AG04450 (cell line): ENCODE measurements at regions of chr4 and their contacts with region 1.

Region 1: GRCh38 chr4:152500800-152501434 is 35.0 kb downstream of the FBXW7 start:
- DNase-seq: peak; percentile 83
- H3K4me3 ChIP-seq: no peak overlapping the region
- H3K27ac ChIP-seq: no peak overlapping the region
- H3K27me3 ChIP-seq: no peaks in the 10 kb centered on the region
- CTCF ChIP-seq: peak; percentile 80

Region 2: GRCh38 chr4:152464030-152464823 is 36.7 kb before region 1 on chr4:
- CTCF ChIA-PET with region 1: interaction called, 22 read pairs
- POLR2A ChIA-PET with region 1: no interaction called
- DNase-seq: no peak
- H3K4me3 ChIP-seq: no peak overlapping the region
- H3K27ac ChIP-seq: no peak overlapping the region
- H3K27me3 ChIP-seq: no peaks in the 10 kb centered on the region
- CTCF ChIP-seq: no peak

Region 3: DNA sequence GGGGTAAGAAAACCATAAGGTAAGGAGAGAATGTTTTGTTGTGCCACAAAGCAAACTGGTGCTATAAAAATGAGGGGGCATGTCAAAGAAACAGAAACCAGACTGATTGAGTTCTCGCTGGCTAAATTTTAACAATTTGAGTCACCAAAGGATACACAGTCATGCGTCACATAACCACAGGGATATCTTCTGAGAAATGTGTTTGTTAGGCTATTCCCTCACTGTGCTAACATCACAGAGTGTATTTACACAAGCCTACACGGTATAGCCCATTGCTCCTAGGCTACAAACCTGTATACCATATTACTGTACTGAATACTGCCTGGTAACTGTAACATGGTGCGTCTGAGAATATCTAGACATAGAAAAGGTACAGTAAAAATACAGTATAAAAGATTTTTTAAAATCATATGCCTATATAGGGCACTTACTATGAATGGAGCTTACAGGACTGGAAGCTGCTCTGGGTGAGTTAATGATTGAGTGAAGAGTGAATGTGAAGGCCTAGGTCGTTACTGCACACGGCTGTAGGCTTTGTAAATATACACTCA is 15.1 kb before region 1 on chr4:
- CTCF ChIA-PET with region 1: interaction called, 52 read pairs
- POLR2A ChIA-PET with region 1: no interaction called
- DNase-seq: peak; percentile 42
- H3K4me3 ChIP-seq: peak overlapping the region; percentile 18; the same call in 1 of the 2 replicates
- H3K27ac ChIP-seq: no peak overlapping the region
- H3K27me3 ChIP-seq: no peaks in the 10 kb centered on the region
- CTCF ChIP-seq: no peak

Region 4: DNA sequence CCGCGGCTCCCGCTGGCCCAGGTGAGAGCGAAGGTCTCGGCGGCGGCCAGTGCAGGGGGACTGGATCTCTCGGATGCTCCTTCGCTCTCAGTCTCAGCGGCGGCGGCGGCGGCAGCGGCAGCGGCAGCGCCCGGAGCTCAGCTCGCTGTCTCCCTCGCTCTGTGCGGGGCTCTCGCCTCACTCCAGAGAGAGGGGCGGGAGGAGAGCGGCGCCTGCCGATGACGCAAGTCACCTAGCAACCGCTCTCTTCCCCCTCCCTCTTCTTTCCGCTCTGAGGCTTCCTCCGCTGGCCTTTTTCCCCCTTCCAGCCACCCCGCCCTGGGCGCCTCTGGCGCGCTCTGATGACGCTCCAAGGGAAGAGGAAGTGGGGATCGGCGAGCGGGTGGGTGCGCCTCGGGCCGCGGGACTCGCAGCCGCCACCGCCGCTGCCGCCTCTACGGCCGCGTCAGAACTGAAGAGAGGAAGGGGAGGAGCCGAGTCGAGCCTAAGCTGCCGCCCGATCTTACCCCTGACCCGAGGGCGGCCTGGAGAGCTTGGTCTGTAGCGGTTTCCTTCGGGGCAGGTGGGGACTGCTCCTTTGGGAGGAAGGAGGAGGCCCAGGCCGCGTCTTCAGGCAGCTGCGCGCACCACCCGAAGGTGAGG is 35.1 kb after region 1 on chr4 and contains the start of gene FBXW7:
- CTCF ChIA-PET with region 1: interaction called, 16 read pairs
- POLR2A ChIA-PET with region 1: interaction called, 7 read pairs
- DNase-seq: peak; percentile 96
- H3K4me3 ChIP-seq: peak within 1 kb of the TSS; percentile 97
- H3K27ac ChIP-seq: peak within 1 kb of the TSS; percentile 89
- H3K27me3 ChIP-seq: no peaks in the 10 kb centered on the region
- CTCF ChIP-seq: no peak
- polyA plus RNA-seq, gene FBXW7: 11.5 and 16.3 TPM in 2 replicates

Region 5: DNA sequence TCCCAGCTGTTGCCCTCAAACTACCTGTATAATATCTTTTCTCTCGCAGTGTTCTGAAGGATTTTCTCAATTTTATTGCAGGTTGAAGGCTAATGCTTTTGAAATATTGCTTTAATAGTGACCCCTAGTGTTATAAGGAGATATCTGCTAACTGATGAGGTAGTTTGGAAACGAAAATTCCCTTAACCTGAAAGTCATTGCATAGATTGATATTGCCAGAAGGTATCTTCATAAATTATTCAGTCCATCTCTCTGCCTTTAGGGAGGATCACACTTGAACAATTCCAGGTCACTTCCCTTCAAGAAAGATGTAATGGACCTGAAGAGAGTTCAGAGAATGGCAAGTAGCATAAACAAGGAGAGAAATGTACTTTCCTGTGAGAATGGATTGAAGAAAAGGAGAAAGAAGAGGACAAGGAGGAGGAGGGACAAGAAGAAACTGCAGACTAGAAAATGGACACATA is 234.5 kb after region 1 on chr4:
- CTCF ChIA-PET with region 1: interaction called, 11 read pairs
- POLR2A ChIA-PET with region 1: no interaction called
- DNase-seq: no peak
- H3K4me3 ChIP-seq: no peak overlapping the region
- H3K27ac ChIP-seq: no peak overlapping the region
- H3K27me3 ChIP-seq: peaks cover 10% of the 10 kb centered on the region
- CTCF ChIP-seq: peak; percentile 61

Region 6: DNA sequence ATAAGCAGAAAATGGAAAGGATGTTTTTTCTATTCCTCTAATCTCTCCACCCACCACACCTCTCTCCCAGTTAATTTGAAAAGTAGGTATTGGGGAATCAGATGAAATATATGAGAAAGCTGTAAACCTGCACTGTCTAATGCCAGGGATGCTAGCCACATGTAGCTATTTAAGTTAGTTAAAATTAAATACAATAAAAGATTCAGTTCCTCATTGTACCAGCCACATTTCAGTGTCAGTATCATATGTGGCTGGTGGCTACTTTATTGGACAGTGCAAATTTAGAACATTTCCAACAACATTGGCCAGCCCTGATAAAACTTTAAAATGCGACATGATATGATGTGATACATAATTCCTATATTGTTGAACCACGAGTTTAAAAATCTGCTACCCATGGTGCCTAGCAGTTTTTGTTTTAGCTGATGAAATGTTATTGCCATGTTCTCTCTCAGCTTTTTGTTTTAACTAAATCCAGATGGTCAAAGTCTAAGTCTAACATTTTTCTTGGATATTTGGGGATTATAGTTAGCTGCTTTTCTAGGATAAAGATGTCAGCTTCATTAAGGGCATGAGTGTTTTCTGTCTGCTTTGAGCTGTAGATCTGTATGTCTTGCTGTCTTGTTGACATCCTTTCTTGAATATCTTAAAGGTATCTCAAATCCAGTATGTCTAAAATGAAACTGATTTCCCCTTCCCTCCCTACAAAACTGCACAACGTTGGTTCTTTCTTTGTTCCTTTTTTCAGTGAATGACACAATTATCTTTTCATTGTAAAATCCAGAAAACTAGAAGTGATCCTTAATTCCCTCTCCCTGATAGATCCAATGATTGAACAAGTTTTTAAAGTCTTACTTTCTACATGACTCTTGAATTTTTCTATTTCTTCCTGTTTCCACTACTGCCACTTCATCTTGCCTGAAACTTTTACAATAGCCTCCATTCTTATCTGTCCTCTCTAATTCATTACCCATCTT is 285.0 kb after region 1 on chr4:
- CTCF ChIA-PET with region 1: no interaction called
- POLR2A ChIA-PET with region 1: no interaction called
- DNase-seq: no peak
- H3K4me3 ChIP-seq: no peak overlapping the region
- H3K27ac ChIP-seq: no peak overlapping the region
- H3K27me3 ChIP-seq: no peaks in the 10 kb centered on the region
- CTCF ChIP-seq: no peak

Region 7: DNA sequence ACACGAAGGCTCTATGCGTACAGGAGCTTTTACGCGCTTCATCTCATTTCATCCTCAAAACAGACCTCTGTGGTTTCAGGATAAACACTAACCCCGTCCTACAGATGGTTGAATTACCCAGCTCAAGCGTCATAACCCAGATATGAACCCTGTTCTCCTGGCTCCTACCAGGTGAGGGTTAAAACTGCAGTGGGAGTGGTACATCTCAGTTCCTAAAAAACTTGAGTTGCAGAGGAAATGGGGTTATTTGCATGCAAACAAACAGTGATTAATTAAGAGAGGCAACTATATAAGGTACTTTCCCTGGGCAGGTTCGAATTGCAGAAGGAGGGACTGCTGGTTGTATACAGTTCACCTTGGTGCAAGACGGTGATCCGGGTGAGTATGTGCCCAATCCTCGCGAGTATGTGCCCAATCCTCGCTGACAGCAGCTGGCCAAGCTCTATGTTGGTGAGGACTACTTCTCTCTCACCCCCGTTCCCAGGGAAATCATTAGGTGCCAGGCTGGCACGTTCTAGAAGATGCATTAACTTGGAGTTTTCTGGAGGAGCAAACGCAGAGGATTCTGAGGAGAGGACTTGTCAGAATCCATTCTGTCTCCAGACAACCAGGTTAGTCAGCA is 507.8 kb after region 1 on chr4:
- CTCF ChIA-PET with region 1: no interaction called
- POLR2A ChIA-PET with region 1: no interaction called
- DNase-seq: no peak
- H3K4me3 ChIP-seq: no peak overlapping the region
- H3K27ac ChIP-seq: no peak overlapping the region
- H3K27me3 ChIP-seq: peaks cover 12% of the 10 kb centered on the region
- CTCF ChIP-seq: no peak